SK-N-SH (cell line): ENCODE measurements at regions of chr17 and their contacts with region 1.

Region 1: DNA sequence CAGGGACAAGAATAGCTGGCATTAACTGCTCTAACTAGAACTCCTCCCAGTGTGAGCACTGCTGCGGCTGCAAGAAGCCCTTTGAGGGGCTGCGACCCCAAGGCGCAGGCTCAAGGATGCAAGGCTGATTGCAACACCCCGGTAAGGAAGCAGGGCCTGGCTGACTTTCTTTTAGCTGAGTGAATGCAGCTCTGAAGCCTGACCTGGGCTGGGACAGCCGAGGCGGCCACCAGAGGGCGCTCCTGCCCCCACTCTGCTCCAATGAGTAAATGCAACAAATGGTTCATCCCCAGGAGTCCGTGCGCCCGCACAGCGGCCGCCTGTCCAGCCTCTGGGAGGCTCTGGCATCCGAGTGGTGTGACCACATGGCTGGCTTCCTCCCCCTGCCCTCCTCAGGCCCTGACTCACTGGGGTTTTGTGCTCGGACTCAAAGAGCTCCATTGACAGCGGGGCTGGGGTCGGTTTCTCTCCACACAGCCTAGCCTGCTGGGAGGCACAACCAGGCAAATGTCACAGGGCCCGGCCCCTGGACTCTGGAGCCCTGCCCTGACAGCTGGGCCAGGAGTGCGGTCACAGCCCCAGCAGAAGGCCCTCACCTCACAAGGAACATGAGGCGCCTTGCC is at the start of gene SMIM5:
- DNase-seq: peak; percentile 98
- H3K4me3 ChIP-seq: no peak within 1 kb of the TSS; a peak in 1 of 4 replicates
- H3K27ac ChIP-seq: peak within 1 kb of the TSS in 1 of 2 experiments; percentile 59; a peak in 3 of 4 replicates
- H3K4me1 ChIP-seq: peaks cover 12 to 15% of the 10 kb centered on the region in 2 experiments; a peak in 3 of 4 replicates
- H3K27me3 ChIP-seq: no peaks in the 10 kb centered on the region
- CTCF ChIP-seq: peak; percentile 99
- EP300 ChIP-seq: no peak
- RAD21 ChIP-seq: peak; percentile 72
- polyA plus RNA-seq, gene SMIM5: 0.02 TPM in 1 of 2 replicates, not detected in the other

Region 2: DNA sequence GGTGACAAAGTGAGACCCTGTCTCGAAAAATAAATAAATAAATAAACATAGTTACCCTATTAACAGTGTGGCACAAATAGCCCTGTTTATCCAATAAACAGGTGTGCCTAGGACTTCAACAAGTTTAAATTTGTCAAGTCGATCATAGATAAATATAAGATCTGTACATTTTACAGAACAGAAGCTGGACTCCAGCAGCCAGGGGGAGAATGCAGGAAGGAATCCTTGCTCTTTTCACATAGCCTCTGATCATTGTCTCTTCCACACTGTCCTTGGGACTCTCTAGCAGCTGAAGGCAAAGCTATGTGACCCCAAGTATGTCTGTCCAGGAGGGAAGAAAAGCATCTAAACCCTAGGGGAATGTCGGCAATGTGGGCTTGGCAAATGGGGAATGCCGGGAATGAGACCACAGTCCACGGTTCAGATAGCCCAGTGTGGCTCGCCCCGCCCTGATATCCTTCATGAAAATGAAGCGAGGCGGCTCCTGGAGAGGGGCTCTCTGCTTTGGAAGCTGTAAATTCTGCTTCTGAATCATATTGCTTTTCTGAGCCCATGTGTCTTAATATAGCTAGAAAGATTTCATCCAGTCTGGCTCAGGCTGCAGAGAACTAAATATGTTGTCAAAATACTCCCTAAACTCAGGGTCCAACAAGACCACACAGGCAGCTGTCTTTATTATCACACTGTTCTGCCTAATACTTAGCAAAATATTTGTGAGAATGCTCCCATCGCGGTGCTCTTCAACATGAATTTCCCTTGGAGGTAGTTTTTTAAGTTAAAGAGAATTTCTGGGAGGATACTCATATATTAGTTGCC is 202.6 kb before region 1 on chr17:
- CTCF ChIA-PET with region 1: interaction called, 13 read pairs
- POLR2A ChIA-PET with region 1: no interaction called
- DNase-seq: no peak
- H3K4me3 ChIP-seq: no peak overlapping the region
- H3K27ac ChIP-seq: no peak overlapping the region
- H3K4me1 ChIP-seq: no peaks in the 10 kb centered on the region; a peak in 1 of 4 replicates
- H3K27me3 ChIP-seq: no peaks in the 10 kb centered on the region
- CTCF ChIP-seq: no peak
- EP300 ChIP-seq: no peak
- RAD21 ChIP-seq: no peak

Region 3: DNA sequence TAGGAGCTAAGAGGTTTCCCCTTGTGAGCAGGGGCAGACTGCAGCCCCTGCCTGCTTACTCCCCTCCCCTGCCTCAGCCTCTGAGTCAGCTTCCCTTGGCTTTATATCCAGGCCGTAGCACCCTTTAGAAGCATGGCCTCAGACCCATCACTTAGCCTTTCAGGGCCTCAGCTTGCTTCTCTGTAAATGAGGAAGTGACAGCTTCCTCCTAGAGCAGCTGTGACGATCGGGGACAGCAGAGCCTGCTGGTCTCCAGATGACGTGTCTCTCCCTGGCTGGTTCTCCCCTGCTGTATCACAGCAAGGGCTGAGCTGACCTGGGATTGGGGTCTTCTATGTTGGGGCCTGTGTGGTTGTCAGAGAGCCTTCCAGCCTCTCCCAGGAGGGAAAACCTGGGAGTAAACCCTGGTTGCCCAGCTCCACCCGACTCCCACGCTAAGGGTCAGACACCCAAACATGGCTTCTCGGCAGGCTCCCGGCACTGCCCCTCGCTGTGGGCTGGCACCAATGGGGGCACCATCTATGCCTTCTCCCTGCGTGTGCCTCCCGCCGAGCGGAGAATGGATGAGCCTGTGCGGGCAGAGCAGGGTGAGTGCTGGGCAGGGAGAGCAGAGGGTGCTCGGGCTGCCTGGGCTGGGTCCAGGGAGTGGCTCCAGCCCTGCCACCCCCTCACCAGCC is 61.6 kb before region 1 on chr17:
- CTCF ChIA-PET with region 1: interaction called, 10 read pairs
- POLR2A ChIA-PET with region 1: no interaction called
- DNase-seq: no peak
- H3K4me3 ChIP-seq: no peak overlapping the region
- H3K27ac ChIP-seq: no peak overlapping the region
- H3K4me1 ChIP-seq: no peaks in the 10 kb centered on the region; a peak in 1 of 4 replicates
- H3K27me3 ChIP-seq: no peaks in the 10 kb centered on the region
- CTCF ChIP-seq: no peak
- EP300 ChIP-seq: no peak
- RAD21 ChIP-seq: no peak

Region 4: DNA sequence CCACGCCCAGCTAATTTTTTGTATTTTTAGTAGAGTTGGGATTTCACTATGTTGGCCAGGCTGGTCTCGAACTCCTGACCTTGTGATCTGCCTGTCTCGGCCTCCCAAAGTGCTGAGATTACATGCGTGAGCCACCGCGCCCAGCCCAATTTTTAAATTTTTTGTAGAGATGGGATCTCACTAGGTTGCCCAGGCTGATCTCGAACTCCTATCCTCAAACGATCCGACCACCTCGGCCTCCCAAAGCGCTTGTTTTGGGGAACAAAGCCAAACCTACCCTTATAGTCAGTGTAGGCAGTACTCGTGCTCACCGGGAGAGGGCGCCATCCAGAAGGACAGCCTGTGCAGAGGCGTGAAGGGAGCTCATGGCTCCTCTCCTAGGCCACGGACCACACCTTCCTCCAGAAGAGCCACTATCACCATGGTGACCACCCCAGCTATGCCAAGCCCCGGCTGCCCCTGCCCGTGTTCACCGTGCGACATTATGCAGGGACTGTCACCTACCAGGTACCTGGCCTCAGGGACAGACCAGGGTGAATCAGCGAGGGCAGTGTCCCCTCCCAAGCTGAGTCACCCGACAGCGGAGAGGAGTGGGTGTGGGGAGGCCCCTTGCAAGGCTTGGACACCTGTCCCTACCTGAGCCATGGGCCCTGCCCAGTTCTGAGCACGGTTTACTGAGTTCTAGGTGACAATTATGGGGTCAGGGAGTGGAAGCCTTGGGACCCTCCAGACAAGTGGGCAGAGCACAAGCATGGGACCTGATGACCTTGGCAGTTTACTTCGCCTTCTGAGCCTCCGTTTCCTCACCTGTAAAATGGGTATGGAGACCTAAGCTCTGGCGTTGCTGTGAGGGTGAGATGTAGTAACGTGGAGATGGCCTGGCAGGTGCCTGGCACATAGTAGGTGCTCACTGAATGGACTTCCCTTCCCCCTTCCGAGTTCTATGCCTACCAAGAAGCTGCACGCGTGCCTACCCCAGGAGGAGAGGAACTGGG is 31.6 kb before region 1 on chr17:
- CTCF ChIA-PET with region 1: interaction called, 68 read pairs
- POLR2A ChIA-PET with region 1: no interaction called
- DNase-seq: peak; percentile 83
- H3K4me3 ChIP-seq: no peak overlapping the region
- H3K27ac ChIP-seq: no peak overlapping the region
- H3K4me1 ChIP-seq: no peaks in the 10 kb centered on the region
- H3K27me3 ChIP-seq: no peaks in the 10 kb centered on the region
- CTCF ChIP-seq: peak; percentile 92
- EP300 ChIP-seq: no peak
- RAD21 ChIP-seq: peak; percentile 41

Region 5: DNA sequence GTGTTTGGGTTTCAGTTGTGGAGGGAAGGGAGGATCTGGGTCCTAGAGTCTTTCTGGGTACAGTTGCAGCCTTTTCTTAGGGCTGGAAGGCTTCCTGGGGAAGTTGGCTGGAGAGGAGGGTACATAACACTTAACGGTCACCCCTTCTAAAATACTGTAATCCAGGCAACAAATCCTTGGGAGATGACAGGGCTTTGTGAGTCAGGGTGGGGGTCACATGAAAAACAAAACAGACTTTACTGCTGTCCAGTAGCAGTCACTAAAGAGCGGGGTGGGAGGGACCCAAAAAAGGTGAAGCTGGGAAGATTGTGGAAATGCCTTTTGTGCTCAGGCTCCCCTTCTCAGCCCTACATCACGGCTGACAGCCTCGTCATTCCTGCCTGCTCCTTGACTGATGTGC is 40.5 kb after region 1 on chr17:
- CTCF ChIA-PET with region 1: interaction called, 26 read pairs
- POLR2A ChIA-PET with region 1: no interaction called
- DNase-seq: no peak
- H3K4me3 ChIP-seq: no peak overlapping the region
- H3K27ac ChIP-seq: no peak overlapping the region
- H3K4me1 ChIP-seq: peaks cover under 1% of the 10 kb centered on the region in 2 experiments; a peak in 3 of 4 replicates
- H3K27me3 ChIP-seq: no peaks in the 10 kb centered on the region
- CTCF ChIP-seq: no peak
- EP300 ChIP-seq: no peak
- RAD21 ChIP-seq: no peak

Region 6: DNA sequence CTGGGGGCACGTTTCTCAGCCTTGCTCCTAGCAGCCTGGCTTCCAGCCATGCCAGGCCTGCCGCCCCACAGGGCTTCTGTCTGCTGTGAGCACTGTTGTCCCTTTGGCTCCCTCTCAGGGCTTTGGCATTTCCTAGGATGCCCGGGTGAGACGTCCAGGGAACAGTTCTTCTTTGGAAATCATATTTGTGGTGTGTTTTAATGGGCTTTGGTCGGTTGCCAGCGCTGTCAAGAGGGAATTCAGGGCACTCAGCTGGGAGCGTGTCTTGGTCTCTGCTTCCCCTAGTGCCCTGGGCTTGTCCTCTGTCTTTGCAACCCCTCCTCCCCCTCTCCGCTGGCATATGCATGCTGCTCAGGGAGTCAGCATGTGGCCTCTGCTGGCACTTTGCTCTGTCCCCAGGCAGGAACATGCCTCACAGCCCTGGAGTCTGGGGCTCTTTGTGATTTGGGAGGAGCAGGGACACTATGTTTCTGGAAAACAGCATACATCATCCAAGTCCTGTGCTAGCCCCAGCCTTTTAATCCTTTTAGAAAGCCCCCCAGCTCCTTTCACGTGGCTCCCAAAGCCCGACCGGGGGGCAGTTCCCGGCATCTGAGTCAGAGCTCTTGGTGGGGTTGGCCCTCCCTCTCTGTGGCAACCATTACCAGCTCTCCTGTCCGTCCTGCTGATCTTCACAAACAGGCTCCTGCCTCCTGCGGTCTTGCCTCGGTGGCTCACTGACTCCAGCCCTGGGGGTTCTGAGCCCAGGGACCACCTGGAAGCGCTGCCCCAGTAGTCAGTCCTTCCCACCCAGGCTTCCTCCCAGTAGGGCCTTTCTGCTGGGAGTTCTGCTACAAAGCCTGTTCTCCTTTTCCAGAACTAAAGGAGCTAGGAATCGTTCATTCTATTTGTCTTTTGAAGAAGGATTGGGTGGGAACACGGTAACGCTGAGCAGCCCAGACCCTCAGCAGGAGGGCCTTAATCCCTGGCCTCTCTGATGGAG is 60.8 kb after region 1 on chr17:
- CTCF ChIA-PET with region 1: interaction called, 33 read pairs
- POLR2A ChIA-PET with region 1: no interaction called
- DNase-seq: peak; percentile 85
- H3K4me3 ChIP-seq: peak overlapping the region in 1 of 2 experiments; percentile 16; a peak in 2 of 4 replicates
- H3K27ac ChIP-seq: peak overlapping the region; percentile 91 to 99
- H3K4me1 ChIP-seq: peaks cover 45 to 62% of the 10 kb centered on the region in 2 experiments; a peak in 3 of 4 replicates
- H3K27me3 ChIP-seq: no peaks in the 10 kb centered on the region
- CTCF ChIP-seq: peak; percentile 53
- EP300 ChIP-seq: peak; percentile 48 to 87; a peak in 2 of 4 replicates
- RAD21 ChIP-seq: peak; percentile 52

Region 7: GRCh38 chr17:75720725-75721462 is 87.9 kb after region 1 on chr17 and contains the start of gene ITGB4:
- CTCF ChIA-PET with region 1: interaction called, 28 read pairs
- POLR2A ChIA-PET with region 1: no interaction called
- DNase-seq: peak; percentile 88
- H3K4me3 ChIP-seq: peak within 1 kb of the TSS; percentile 46 to 50
- H3K27ac ChIP-seq: no peak within 1 kb of the TSS
- H3K4me1 ChIP-seq: peaks cover 0 to 4% of the 10 kb centered on the region in 2 experiments; a peak in 1 of 4 replicates
- H3K27me3 ChIP-seq: peaks cover 44% of the 10 kb centered on the region
- CTCF ChIP-seq: no peak
- EP300 ChIP-seq: no peak
- RAD21 ChIP-seq: no peak
- polyA plus RNA-seq, gene ITGB4: 3.6 and 7.0 TPM in 2 replicates